Heart right ventricle (tissue), 16 donors: ENCODE measurements at regions of chr7 and their contacts with region 1.

Region 1: DNA sequence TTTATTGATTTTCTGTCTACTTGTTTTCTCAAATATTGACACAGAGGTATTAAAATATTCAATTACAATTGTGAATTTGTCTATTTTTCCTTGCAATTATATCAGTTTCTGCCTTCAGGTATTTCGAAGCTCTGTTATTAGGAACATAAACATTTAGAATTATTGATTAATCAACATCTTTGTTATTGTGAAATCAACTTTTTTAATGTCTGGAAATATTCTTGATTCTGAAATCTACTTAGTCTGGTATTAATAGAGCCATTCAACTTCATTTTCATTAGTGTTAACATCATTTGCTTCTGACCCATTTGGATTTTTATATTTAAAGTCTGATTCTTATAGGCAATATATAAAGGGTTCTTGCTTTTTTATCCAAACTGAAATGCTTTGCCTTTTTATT is 69.8 kb upstream of the CALN1 start:
- DNase-seq: no peak
- ATAC-seq: no peak
- H3K4me3 ChIP-seq: no peak overlapping the region
- H3K27ac ChIP-seq: no peak overlapping the region
- H3K4me1 ChIP-seq: no peaks in the 10 kb centered on the region
- H3K27me3 ChIP-seq: peaks cover 0 to 22% (median 0%) of the 10 kb centered on the region in 7 donors
- CTCF ChIP-seq: no peak

Region 2: GRCh38 chr7:71995111-71995510 is 486.8 kb before region 1 on chr7:
- intact Hi-C with region 1: loop called in 1 of 10 experiments (anchors 10 kb)
- DNase-seq: no peak
- ATAC-seq: no peak
- H3K4me3 ChIP-seq: no peak overlapping the region
- H3K27ac ChIP-seq: no peak overlapping the region
- H3K4me1 ChIP-seq: no peaks in the 10 kb centered on the region
- H3K27me3 ChIP-seq: no peaks in the 10 kb centered on the region
- CTCF ChIP-seq: no peak

Region 3: GRCh38 chr7:72326206-72326922 is 155.6 kb before region 1 on chr7:
- intact Hi-C with region 1: no loop called
- DNase-seq: no peak
- ATAC-seq: no peak
- H3K4me3 ChIP-seq: no peak overlapping the region
- H3K27ac ChIP-seq: no peak overlapping the region
- H3K4me1 ChIP-seq: no peaks in the 10 kb centered on the region
- H3K27me3 ChIP-seq: peaks cover 0 to 8% (median 0%) of the 10 kb centered on the region in 7 donors
- CTCF ChIP-seq: no peak